H1 (cell line): ENCODE measurements at regions of chr3 and their contacts with region 1.

Region 1: GRCh38 chr3:184469423-184469822 is 89.6 kb downstream of the CHRD start:
- DNase-seq: peak; percentile 70 to 89
- H3K4me3 ChIP-seq: no peak overlapping the region
- H3K27ac ChIP-seq: no peak overlapping the region
- H3K4me1 ChIP-seq: peaks cover 0 to 3% (median 2%) of the 10 kb centered on the region in 4 experiments; a peak in 6 of 7 replicates
- H3K27me3 ChIP-seq: no peaks in the 10 kb centered on the region
- CTCF ChIP-seq: peak; percentile 93 to 96 (median 95)
- EP300 ChIP-seq: no peak
- POLR2A ChIP-seq: no peak
- RAD21 ChIP-seq: peak; percentile 92 to 93

Region 2: GRCh38 chr3:184380191-184380626 is 89.2 kb before region 1 on chr3:
- CTCF ChIA-PET with region 1: interaction called, 121 read pairs
- POLR2A ChIA-PET with region 1: no interaction called
- DNase-seq: peak in 1 of 2 experiments; percentile 79
- H3K4me3 ChIP-seq: peak overlapping the region; percentile 32 to 71 (median 54); a peak in 7 of 8 replicates
- H3K27ac ChIP-seq: no peak overlapping the region
- H3K4me1 ChIP-seq: peaks cover 0 to 33% (median 27%) of the 10 kb centered on the region in 4 experiments; a peak in 6 of 7 replicates
- H3K27me3 ChIP-seq: peaks cover 31 to 55% (median 49%) of the 10 kb centered on the region in 4 experiments
- CTCF ChIP-seq: no peak
- EP300 ChIP-seq: no peak
- POLR2A ChIP-seq: no peak
- RAD21 ChIP-seq: no peak

Region 3: DNA sequence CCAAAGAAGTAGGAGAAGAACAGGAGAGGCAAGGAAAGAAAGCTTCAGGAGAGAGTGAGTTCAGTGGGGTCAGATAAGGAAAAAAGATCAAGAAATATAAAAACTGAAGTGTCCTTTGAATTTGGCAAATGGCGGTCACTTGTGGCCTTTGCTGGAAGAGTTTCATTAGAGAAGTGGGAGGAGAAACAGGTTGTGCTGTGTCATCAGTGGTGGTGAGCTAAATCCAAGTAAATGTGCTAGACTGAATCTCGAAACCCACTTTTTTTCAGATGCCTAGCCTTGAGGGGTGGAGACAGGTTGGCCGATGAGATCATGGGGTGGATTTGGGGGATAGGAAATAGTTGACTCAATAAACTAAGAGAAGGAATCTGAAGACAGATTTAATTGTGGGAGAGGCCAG is 45.9 kb before region 1 on chr3:
- CTCF ChIA-PET with region 1: interaction called, 53 read pairs
- POLR2A ChIA-PET with region 1: no interaction called
- DNase-seq: no peak
- H3K4me3 ChIP-seq: no peak overlapping the region
- H3K27ac ChIP-seq: no peak overlapping the region
- H3K4me1 ChIP-seq: no peaks in the 10 kb centered on the region
- H3K27me3 ChIP-seq: no peaks in the 10 kb centered on the region
- CTCF ChIP-seq: no peak
- EP300 ChIP-seq: no peak
- POLR2A ChIP-seq: no peak
- RAD21 ChIP-seq: no peak

Region 4: DNA sequence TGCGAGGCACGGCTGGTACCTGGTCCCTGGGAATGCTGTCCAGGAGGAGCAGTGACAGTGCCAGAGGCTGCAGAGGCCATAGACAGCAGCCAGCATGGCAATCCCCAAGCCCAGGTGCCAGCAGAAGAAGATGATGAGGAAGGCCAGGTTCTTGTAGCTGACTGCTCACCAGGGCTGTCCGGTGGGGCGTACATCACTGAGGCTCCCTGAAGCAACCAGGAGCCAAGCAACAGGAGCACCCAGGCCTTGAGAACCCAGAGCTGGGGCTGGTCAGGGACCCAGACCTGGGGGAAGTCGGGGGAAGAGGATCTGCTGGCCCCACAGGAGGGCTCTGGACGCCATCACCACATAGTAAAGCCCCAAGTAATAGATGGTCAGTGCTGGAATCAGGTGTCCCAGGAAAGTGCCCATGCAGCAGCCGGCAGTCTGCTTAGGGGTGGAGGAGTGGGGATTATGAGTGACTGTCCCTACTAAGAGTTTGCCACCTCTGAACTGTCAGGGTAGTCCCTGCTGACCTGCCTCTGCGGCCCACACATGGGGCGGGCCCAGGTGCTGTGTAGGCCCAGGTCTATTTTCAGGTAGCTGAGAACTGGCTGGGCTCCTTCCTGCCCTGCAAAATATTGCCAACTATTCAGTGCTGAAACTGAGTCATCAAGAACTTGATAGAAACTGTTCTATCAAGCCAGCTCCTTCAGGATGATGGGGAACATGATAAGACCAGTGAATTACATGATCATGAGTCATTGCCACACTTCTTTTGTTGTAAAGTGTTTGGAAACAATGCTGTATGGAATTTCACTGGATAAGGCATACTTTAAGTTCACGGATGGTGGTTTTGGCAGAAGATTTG is 20.9 kb before region 1 on chr3:
- CTCF ChIA-PET with region 1: interaction called, 63 read pairs
- POLR2A ChIA-PET with region 1: no interaction called
- DNase-seq: no peak
- H3K4me3 ChIP-seq: no peak overlapping the region
- H3K27ac ChIP-seq: no peak overlapping the region
- H3K4me1 ChIP-seq: no peaks in the 10 kb centered on the region
- H3K27me3 ChIP-seq: no peaks in the 10 kb centered on the region
- CTCF ChIP-seq: no peak
- EP300 ChIP-seq: no peak
- POLR2A ChIP-seq: no peak
- RAD21 ChIP-seq: no peak

Region 5: DNA sequence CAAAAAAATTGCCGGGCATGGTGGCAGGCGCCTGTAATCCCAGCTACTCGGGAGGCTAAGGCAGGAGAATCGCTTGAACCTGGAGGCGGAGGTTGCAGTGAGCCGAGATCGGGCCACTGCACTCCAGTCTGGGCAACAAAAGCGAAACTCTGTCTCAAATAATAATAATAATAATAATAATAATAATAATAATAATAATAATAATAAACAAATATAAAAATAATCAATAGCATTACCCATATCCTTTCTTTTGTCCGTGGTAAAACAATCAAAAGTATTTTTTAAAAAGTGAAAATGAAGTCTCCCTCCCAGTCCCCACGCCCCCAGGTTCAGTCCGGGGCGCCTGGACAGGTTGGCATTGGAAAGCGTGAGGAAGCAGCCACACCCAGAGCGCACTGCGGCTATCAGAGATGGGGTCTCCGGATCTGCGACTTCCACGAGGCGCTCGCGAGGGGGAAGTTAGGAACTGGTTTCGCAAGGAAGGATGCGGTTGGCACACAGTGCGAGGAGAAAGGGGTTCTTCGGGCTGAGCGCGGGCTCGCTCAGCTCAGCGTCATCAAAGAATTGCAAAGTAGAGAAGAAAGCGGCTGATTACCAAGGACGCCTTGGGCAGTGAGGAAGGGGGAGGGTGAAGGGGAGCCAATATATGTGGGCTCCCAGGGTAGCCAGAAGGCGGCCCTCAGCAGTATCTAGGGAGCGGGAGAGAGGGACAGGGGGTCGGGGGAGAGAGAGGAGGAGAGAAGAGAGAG is 22.6 kb after region 1 on chr3:
- CTCF ChIA-PET with region 1: interaction called, 17 read pairs
- POLR2A ChIA-PET with region 1: no interaction called
- DNase-seq: no peak
- H3K4me3 ChIP-seq: peak overlapping the region; percentile 20 to 61 (median 36); a peak in 5 of 8 replicates
- H3K27ac ChIP-seq: no peak overlapping the region
- H3K4me1 ChIP-seq: peaks cover 0 to 5% (median under 1%) of the 10 kb centered on the region in 4 experiments; a peak in 3 of 7 replicates
- H3K27me3 ChIP-seq: peaks cover 2 to 43% (median 35%) of the 10 kb centered on the region in 4 experiments; a peak in 6 of 7 replicates
- CTCF ChIP-seq: no peak
- EP300 ChIP-seq: no peak
- POLR2A ChIP-seq: no peak
- RAD21 ChIP-seq: no peak

Region 6: GRCh38 chr3:184523825-184524615 is 54.6 kb after region 1 on chr3:
- CTCF ChIA-PET with region 1: interaction called, 22 read pairs
- POLR2A ChIA-PET with region 1: interaction called, 4 read pairs
- DNase-seq: no peak
- H3K4me3 ChIP-seq: no peak overlapping the region; a peak in 1 of 8 replicates
- H3K27ac ChIP-seq: no peak overlapping the region
- H3K4me1 ChIP-seq: peaks cover 0 to 14% (median 9%) of the 10 kb centered on the region in 4 experiments
- H3K27me3 ChIP-seq: no peaks in the 10 kb centered on the region
- CTCF ChIP-seq: no peak
- EP300 ChIP-seq: no peak
- POLR2A ChIP-seq: peak in 1 of 2 experiments; percentile 33; a peak in 1 of 3 replicates
- RAD21 ChIP-seq: no peak

Region 7: GRCh38 chr3:184549793-184550577 is 80.6 kb after region 1 on chr3:
- CTCF ChIA-PET with region 1: interaction called, 150 read pairs
- POLR2A ChIA-PET with region 1: interaction called, 3 read pairs
- DNase-seq: no peak
- H3K4me3 ChIP-seq: no peak overlapping the region
- H3K27ac ChIP-seq: no peak overlapping the region
- H3K4me1 ChIP-seq: no peaks in the 10 kb centered on the region
- H3K27me3 ChIP-seq: no peaks in the 10 kb centered on the region; a peak in 1 of 7 replicates
- CTCF ChIP-seq: no peak
- EP300 ChIP-seq: no peak
- POLR2A ChIP-seq: no peak
- RAD21 ChIP-seq: no peak